K562 (cell line): ENCODE measurements at regions of chr2 and their contacts with region 1.

Region 1: DNA sequence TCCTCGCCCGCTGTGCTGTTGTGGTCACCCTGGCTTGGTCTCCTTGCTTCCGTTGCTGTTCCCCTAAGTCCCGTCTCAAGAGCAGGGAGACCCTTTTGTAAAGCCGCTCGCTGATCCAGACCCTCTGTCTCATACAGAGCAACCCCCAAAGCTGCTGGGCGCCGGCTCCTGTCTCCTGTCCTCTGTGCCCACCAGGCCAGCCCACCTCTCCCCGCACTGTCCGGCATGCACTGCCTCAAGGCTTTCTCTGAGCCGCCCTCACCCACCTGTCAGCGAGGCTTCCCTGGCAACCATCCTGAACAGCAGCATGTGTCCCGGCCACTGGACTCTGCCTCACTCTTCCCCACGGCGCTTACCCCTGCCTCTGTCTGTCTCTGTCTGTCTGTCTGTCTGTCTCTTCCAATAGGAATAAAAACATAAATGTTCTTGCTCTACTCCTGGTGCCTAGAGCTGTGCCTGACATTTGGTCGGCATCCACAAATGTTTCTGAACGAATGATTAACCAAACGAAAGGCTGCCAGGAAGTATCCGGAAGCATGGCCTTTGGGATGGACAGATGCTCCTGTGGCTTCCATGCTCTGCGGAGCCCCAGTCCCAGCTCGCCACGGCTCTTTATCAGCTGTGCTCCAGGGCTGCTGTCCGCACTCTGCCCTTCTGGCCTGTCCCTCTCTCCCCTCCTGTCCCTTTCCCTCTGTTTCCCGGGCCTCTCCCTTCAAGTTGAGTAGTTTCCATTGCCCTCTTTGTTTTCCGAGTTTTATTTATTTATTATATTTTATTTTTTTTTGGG is 7.8 kb downstream of the COLEC11 start:
- DNase-seq: no peak
- ATAC-seq: peak; percentile 11; the same call in 1 of the 3 replicates
- H3K4me3 ChIP-seq: peak overlapping the region; percentile 29; the same call in 1 of the 2 replicates
- H3K27ac ChIP-seq: peak overlapping the region; percentile 53; the same call in 1 of the 3 replicates
- H3K4me1 ChIP-seq: peaks cover 18 to 69% of the 10 kb centered on the region in 2 experiments
- H3K27me3 ChIP-seq: no peaks in the 10 kb centered on the region
- CTCF ChIP-seq: no peak
- EP300 ChIP-seq: no peak
- POLR2A ChIP-seq: no peak
- RAD21 ChIP-seq: no peak

Region 2: DNA sequence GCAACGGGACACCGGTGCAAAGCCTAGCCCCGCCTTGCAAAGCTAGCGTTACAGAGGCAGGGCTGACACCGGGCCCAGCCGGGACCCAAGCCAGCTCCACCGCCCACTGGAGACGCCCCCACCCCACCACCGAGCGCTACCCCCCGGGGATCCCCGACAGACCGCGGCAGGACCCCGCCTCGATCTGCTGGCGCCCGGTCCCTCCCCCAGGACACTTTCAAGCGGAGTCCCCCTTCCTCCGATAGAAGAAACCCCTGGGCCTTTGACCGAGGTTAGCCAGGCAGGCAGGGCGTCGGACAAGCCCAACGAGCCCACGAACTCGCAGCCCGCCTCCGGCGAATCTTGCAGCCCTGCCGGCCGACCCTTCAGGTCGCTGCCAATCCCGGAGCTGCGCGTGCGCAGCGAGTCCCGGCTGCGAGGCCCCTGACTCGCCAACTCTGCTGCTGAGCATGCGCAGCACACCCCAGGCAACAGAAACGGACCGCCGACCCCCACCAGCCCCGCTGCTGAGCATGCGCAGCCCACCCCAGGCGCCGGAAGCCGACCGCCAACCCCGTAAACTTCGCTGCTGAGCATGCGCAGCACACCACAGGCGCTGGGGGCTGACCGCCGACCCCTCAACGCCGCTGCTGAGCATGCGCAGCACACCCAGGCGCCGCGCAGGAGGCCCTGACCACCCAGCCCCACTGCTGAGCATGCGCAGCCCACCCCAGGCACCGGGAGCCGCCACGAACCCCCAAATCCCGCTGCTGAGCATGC is 84.1 kb before region 1 on chr2:
- CTCF ChIA-PET with region 1: no interaction called
- POLR2A ChIA-PET with region 1: no interaction called
- in situ Hi-C with region 1: no loop called
- intact Hi-C with region 1: loop called (anchors 2 kb)
- DNase-seq: peak; percentile 98 to 100 (median 99)
- ATAC-seq: peak; percentile 85
- H3K4me3 ChIP-seq: peak overlapping the region; percentile 71
- H3K27ac ChIP-seq: peak overlapping the region; percentile 87
- H3K4me1 ChIP-seq: peaks cover 23 to 28% of the 10 kb centered on the region in 2 experiments
- H3K27me3 ChIP-seq: no peaks in the 10 kb centered on the region
- CTCF ChIP-seq: no peak; a peak in 1 of 6 replicates
- EP300 ChIP-seq: 0 out of 2 replicates have a peak, but pooled peaks have one; percentile 3
- POLR2A ChIP-seq: peak; percentile 69
- RAD21 ChIP-seq: no peak

Region 3: GRCh38 chr2:3585261-3586109 is 17.3 kb before region 1 on chr2:
- CTCF ChIA-PET with region 1: no interaction called
- POLR2A ChIA-PET with region 1: interaction called, 11 read pairs
- in situ Hi-C with region 1: no loop called
- intact Hi-C with region 1: loop called (anchors 2 kb)
- DNase-seq: peak in 3 of 4 experiments; percentile 30 to 34 (median 31)
- ATAC-seq: peak; percentile 49
- H3K4me3 ChIP-seq: no peak overlapping the region
- H3K27ac ChIP-seq: no peak overlapping the region
- H3K4me1 ChIP-seq: peaks cover 20 to 31% of the 10 kb centered on the region in 2 experiments; a peak in 4 of 5 replicates
- H3K27me3 ChIP-seq: no peaks in the 10 kb centered on the region
- CTCF ChIP-seq: no peak
- EP300 ChIP-seq: no peak
- POLR2A ChIP-seq: no peak
- RAD21 ChIP-seq: no peak

Region 4: DNA sequence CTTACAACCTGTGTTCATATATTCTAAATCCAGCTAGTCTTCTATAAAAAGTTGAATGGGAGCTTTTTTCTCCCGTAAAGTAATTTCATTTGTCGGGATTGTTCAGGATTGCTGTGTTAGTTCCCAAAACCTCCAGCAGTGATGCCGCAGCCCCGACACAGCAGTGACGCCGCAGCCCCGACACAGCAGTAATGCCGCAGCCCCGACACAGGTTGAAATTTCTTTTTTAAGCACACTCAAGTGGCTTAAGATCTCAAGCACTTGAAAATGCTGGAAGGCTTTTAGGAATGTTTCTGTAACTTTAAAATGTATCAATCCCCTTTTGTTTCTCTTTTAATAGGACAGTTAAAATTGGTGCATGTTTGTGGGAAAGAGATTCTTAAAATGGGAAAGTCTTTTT is 246.0 kb after region 1 on chr2:
- CTCF ChIA-PET with region 1: no interaction called
- POLR2A ChIA-PET with region 1: no interaction called
- in situ Hi-C with region 1: no loop called
- intact Hi-C with region 1: no loop called
- DNase-seq: no peak
- ATAC-seq: no peak
- H3K4me3 ChIP-seq: no peak overlapping the region
- H3K27ac ChIP-seq: no peak overlapping the region
- H3K4me1 ChIP-seq: no peaks in the 10 kb centered on the region
- H3K27me3 ChIP-seq: no peaks in the 10 kb centered on the region; a peak in 1 of 5 replicates
- CTCF ChIP-seq: no peak
- EP300 ChIP-seq: no peak
- POLR2A ChIP-seq: no peak
- RAD21 ChIP-seq: no peak

Region 5: DNA sequence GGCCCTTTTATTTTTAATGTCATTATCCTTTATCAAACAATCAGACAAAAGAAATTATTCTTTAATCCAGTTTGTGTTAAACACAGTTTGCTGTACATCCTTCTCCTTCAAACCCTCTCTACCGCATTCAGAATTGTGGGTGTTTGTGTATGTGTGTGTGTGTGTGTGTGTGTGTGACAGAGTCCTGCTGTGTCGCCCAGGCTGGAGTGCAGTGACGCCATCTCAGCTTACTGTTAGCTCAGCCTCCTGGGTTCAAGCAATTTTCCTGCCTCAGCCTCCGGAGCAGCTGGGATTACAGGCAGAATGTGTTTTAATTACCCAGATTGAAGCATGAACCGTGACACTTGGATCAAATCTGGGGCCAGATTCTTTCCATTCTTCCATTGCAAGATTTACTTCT is 824.3 kb after region 1 on chr2:
- CTCF ChIA-PET with region 1: no interaction called
- POLR2A ChIA-PET with region 1: no interaction called
- in situ Hi-C with region 1: no loop called
- intact Hi-C with region 1: no loop called
- DNase-seq: no peak
- ATAC-seq: no peak
- H3K4me3 ChIP-seq: no peak overlapping the region
- H3K27ac ChIP-seq: no peak overlapping the region
- H3K4me1 ChIP-seq: no peaks in the 10 kb centered on the region
- H3K27me3 ChIP-seq: no peaks in the 10 kb centered on the region
- CTCF ChIP-seq: no peak
- EP300 ChIP-seq: no peak
- POLR2A ChIP-seq: no peak
- RAD21 ChIP-seq: no peak

Region 6: DNA sequence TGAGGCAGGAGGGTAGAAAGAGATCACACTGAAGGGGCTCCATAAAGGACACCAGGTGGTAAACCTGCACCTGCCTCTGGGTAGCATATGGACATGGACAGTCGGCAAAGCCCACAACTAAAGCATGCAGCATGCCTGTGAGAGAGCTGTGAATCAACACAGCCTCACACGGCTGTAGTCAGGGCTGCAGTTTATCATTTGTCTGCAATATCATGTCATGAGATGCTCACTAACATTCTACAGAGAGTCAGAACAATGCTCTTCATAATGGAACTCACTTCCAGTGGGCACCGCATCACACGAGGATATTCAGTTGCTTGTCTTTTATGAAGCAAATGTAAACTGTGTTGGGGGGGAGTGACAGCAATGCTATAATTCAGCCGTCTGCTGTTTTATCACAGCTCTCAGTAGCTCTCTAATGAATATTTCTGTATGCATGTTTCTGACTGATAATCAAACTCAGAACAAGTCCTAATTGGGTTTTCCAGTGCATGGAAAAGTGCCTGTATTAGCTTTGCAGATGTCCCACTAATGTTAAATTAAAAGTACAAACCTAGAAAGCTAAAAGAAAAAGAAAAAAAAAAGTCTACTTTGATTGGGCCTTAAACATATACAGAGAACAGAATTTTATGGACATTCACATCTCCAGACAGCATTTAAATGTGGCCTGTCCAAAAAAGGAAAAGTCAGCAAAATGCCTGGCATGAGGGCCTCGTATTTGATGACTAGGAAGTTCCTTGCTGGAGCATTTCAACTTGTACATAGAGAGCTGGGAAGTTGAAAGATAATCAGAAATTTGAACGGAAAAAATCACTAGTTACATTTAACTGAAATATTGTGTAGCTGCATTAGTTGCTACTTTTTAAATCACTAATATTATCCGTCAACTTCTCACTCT is 1683.4 kb after region 1 on chr2:
- CTCF ChIA-PET with region 1: no interaction called
- POLR2A ChIA-PET with region 1: no interaction called
- in situ Hi-C with region 1: no loop called
- intact Hi-C with region 1: no loop called
- DNase-seq: no peak
- ATAC-seq: no peak
- H3K4me3 ChIP-seq: no peak overlapping the region
- H3K27ac ChIP-seq: no peak overlapping the region
- H3K4me1 ChIP-seq: no peaks in the 10 kb centered on the region
- H3K27me3 ChIP-seq: no peaks in the 10 kb centered on the region
- CTCF ChIP-seq: no peak
- EP300 ChIP-seq: no peak
- POLR2A ChIP-seq: no peak
- RAD21 ChIP-seq: no peak